ENCODE measurements at regions of chr1 and their contacts with region 1.

Region 1: GRCh38 chr1:3796215-3797061 is at the start of gene LRRC47:
- DNase-seq: peak; percentile 90
- H3K4me3 ChIP-seq: peak within 1 kb of the TSS; percentile 80 to 91 (median 85)
- H3K27ac ChIP-seq: peak within 1 kb of the TSS; percentile 24
- H3K4me1 ChIP-seq: peaks cover 21% of the 10 kb centered on the region
- H3K27me3 ChIP-seq: no peaks in the 10 kb centered on the region
- CTCF ChIP-seq: no peak
- total RNA-seq, gene LRRC47: 31.2 to 40.2 TPM

Region 2: GRCh38 chr1:3695326-3696217 is 100.9 kb before region 1 on chr1:
- CTCF ChIA-PET with region 1: no interaction called
- dilution Hi-C with region 1: no loop called
- in situ Hi-C with region 1: no loop called
- intact Hi-C with region 1: loop called (anchors 5 kb)
- DNase-seq: no peak
- H3K4me3 ChIP-seq: no peak overlapping the region
- H3K27ac ChIP-seq: no peak overlapping the region
- H3K4me1 ChIP-seq: peaks cover 35% of the 10 kb centered on the region
- H3K27me3 ChIP-seq: no peaks in the 10 kb centered on the region
- CTCF ChIP-seq: peak; percentile 76 to 84

Region 3: GRCh38 chr1:3772027-3772714 is 24.3 kb before region 1 on chr1:
- CTCF ChIA-PET with region 1: interaction called, 6 read pairs
- dilution Hi-C with region 1: no loop called
- in situ Hi-C with region 1: no loop called
- intact Hi-C with region 1: loop called (anchors 2 kb)
- DNase-seq: peak; percentile 56
- H3K4me3 ChIP-seq: peak overlapping the region; percentile 44 to 58 (median 57)
- H3K27ac ChIP-seq: no peak overlapping the region
- H3K4me1 ChIP-seq: peaks cover 18% of the 10 kb centered on the region
- H3K27me3 ChIP-seq: no peaks in the 10 kb centered on the region
- CTCF ChIP-seq: no peak

Region 4: DNA sequence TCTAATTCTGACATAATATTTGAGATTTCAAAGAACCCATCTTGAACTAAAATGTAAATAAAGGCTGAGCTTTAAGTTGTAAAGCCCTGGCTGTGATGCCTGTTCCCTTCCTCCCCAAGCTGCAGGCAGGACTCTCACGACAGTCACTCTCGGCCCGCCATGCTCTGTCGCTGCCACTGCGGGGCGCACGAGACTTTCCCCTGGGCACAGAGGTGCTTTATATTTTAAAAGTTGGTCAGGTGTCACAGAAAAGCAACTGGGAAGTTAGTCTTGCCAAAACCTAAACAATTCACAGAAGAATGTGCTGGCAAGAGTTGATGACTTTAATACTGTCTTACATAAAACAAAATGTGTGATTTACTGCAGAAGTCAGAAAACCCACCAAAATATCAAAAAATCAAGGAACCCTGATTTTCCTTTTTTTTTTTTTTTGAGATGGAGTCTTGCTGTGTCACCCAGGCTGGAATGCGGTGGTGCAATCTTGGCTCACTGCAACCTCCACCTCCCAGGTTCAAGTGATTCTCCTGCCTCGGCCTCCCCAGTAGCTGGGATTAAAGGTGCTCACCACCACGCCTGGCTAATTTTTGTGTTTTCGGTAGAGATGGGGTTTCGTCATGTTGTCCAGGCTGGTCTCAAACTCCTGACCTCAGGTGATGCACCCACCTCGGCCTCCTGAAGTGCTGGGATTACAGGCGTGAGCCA is 10.8 kb before region 1 on chr1:
- CTCF ChIA-PET with region 1: interaction called, 10 read pairs
- dilution Hi-C with region 1: no loop called
- in situ Hi-C with region 1: no loop called
- intact Hi-C with region 1: loop called (anchors 2 kb)
- DNase-seq: peak; percentile 36
- H3K4me3 ChIP-seq: no peak overlapping the region
- H3K27ac ChIP-seq: no peak overlapping the region
- H3K4me1 ChIP-seq: no peaks in the 10 kb centered on the region
- H3K27me3 ChIP-seq: no peaks in the 10 kb centered on the region
- CTCF ChIP-seq: peak; percentile 42 to 53

Region 5: GRCh38 chr1:3898994-3899753 is 102.7 kb after region 1 on chr1:
- CTCF ChIA-PET with region 1: no interaction called
- dilution Hi-C with region 1: no loop called
- in situ Hi-C with region 1: no loop called
- intact Hi-C with region 1: no loop called
- DNase-seq: peak; percentile 4
- H3K4me3 ChIP-seq: peak overlapping the region; percentile 75 to 96 (median 88)
- H3K27ac ChIP-seq: peak overlapping the region; percentile 73
- H3K4me1 ChIP-seq: no peaks in the 10 kb centered on the region
- H3K27me3 ChIP-seq: no peaks in the 10 kb centered on the region
- CTCF ChIP-seq: peak in 1 of 2 donors; percentile 21

Region 6: GRCh38 chr1:3922201-3922725 is 125.8 kb after region 1 on chr1:
- CTCF ChIA-PET with region 1: no interaction called
- dilution Hi-C with region 1: no loop called
- in situ Hi-C with region 1: no loop called
- intact Hi-C with region 1: no loop called
- DNase-seq: no peak
- H3K4me3 ChIP-seq: no peak overlapping the region
- H3K27ac ChIP-seq: no peak overlapping the region
- H3K4me1 ChIP-seq: no peaks in the 10 kb centered on the region
- H3K27me3 ChIP-seq: no peaks in the 10 kb centered on the region
- CTCF ChIP-seq: no peak